ENCODE measurements at regions of chr7 and their contacts with region 1.

Region 1: GRCh38 chr7:92833024-92833765 is 3.2 kb downstream of the CDK6 start:
- DNase-seq: no peak
- H3K4me3 ChIP-seq: peak overlapping the region; percentile 73
- CTCF ChIP-seq: peak; percentile 76

Region 2: GRCh38 chr7:92916674-92917224 is 83.6 kb after region 1 on chr7:
- in situ Hi-C with region 1: no loop called
- DNase-seq: peak; percentile 60
- H3K4me3 ChIP-seq: no peak overlapping the region
- CTCF ChIP-seq: no peak

Region 3: DNA sequence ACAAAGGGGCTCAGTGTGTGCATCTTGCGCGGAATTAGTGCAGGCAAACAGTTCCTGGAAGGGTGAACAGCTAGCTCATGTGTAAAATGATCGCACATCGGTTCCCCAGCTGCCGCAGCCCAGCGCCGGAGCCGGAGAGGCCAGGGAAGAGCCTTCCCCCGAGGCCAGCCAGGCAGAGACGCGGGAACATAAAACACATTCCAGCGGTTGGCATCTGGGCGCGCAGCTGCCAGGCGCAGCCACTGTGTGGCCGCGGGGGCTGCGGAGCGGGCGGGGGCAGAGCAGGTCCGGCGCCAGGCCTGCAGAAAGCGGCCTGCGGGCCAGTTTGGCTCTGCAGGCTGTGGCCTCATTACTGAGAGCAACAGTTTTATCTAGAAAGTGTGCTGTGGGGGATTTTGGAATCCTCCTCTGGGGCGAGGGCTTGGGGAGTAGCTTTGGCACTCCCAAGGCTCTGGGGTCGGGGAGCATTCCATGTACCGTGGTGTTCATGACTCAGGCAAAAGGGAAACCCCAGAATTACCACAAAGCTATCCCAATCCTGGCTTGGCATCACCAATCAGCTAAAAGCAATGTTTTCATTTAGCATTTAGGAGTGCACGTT is 210.3 kb after region 1 on chr7:
- in situ Hi-C with region 1: loop called (anchors 25 kb)
- DNase-seq: peak; percentile 89
- H3K4me3 ChIP-seq: peak overlapping the region; percentile 28
- CTCF ChIP-seq: no peak

Measured in astrocyte of the cerebellum (primary cell).